CD4-positive, alpha-beta memory T cell (primary cell): ENCODE measurements at regions of chr6 and their contacts with region 1.

Region 1: GRCh38 chr6:26087284-26088115 is at the start of gene HFE:
- DNase-seq: peak in 4 of 5 donors; percentile 24 to 43 (median 26)
- H3K4me3 ChIP-seq: peak within 1 kb of the TSS; percentile 67 to 79
- H3K4me3 Mint-ChIP-seq: peak within 1 kb of the TSS; percentile 77 to 93 (median 90)
- H3K27ac ChIP-seq: peak within 1 kb of the TSS; percentile 68
- H3K27ac Mint-ChIP-seq: peak within 1 kb of the TSS; percentile 71 to 94 (median 90)
- H3K4me1 ChIP-seq: peaks cover 36% of the 10 kb centered on the region
- H3K4me1 Mint-ChIP-seq: peaks cover 20 to 41% (median 28%) of the 10 kb centered on the region in 4 donors
- H3K27me3 ChIP-seq: no peaks in the 10 kb centered on the region
- H3K27me3 Mint-ChIP-seq: no peaks in the 10 kb centered on the region
- total RNA-seq, gene HFE: 3.5 to 4.2 TPM

Region 2: DNA sequence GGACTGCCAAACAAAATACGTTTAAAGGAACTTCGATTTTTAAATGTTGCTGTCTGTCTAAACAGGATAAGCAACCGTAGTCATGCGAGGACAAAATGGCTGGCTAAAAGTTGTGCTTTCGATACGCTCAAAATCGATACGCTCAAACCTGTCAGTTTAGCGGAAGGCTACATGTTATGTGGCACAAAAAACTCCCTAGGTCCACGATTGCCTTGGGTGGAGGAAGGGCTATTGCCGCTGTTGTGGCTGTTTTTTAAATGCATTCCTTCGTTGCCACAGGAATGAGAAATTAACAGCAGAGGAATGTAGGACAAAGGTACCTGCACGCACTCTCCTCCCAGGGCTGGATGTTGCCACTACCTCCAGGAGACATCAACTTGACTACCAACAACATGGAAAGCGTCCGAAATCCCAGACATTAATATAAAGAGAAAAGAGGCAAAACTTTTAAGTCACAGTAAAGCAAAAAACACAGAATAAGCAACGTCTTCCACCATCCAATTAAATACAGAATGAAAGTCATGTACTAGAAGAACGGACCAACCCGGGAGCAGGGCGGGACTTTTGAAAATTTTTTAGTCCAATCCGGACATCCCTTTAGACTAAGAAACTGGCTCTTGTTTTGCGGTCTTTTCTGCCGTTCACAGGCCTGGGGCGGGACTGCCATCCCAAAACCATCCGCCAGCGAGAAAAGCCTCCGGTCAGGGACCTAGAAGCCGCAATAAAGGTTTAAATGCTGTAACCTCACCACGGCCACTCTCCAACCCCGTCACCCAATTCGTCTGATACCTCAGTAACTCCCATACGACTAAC is 32.4 kb before region 1 on chr6:
- CTCF ChIA-PET with region 1: interaction called, 533 read pairs
- POLR2A ChIA-PET with region 1: interaction called, 59 read pairs
- intact Hi-C with region 1: no loop called
- DNase-seq: peak; percentile 89 to 96 (median 91)
- H3K4me3 ChIP-seq: peak overlapping the region; percentile 67 to 78
- H3K4me3 Mint-ChIP-seq: peak overlapping the region; percentile 93 to 96 (median 94)
- H3K27ac ChIP-seq: peak overlapping the region; percentile 84
- H3K27ac Mint-ChIP-seq: peak overlapping the region; percentile 91 to 98 (median 98)
- H3K4me1 ChIP-seq: peaks cover 24% of the 10 kb centered on the region
- H3K4me1 Mint-ChIP-seq: peaks cover 7 to 34% (median 15%) of the 10 kb centered on the region in 4 donors
- H3K27me3 ChIP-seq: no peaks in the 10 kb centered on the region
- H3K27me3 Mint-ChIP-seq: no peaks in the 10 kb centered on the region

Region 3: DNA sequence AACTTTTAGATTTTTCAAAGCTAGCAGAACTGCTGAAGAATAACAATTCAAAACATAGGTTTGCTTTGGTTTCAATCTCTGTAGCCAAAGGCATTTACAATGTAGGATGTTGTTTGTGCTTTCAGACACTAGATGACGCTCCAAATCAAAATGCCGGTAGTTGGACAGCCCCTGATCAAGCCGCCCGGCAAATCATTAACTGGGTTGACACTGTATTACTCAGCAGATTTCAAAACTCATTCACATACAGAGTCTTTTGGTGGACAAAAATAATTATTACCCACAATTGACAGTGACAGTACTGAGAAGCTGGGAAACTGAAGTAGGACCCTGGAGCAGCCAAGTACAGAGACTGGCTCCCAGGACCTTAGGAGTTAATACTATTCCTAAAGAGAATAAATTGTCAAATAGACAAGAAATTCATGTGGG is 21.5 kb before region 1 on chr6:
- CTCF ChIA-PET with region 1: interaction called, 533 read pairs
- POLR2A ChIA-PET with region 1: interaction called, 22 read pairs
- intact Hi-C with region 1: no loop called
- DNase-seq: peak; percentile 70 to 76 (median 71)
- H3K4me3 ChIP-seq: no peak overlapping the region
- H3K4me3 Mint-ChIP-seq: no peak overlapping the region
- H3K27ac ChIP-seq: no peak overlapping the region
- H3K27ac Mint-ChIP-seq: peak overlapping the region in 1 of 7 donors; percentile 30
- H3K4me1 ChIP-seq: no peaks in the 10 kb centered on the region
- H3K4me1 Mint-ChIP-seq: peaks cover 4 to 12% (median 7%) of the 10 kb centered on the region in 4 donors
- H3K27me3 ChIP-seq: no peaks in the 10 kb centered on the region
- H3K27me3 Mint-ChIP-seq: peaks cover 0 to 4% of the 10 kb centered on the region in 2 donors

Region 4: GRCh38 chr6:26071135-26071534 is 16.4 kb before region 1 on chr6:
- CTCF ChIA-PET with region 1: interaction called, 533 read pairs
- POLR2A ChIA-PET with region 1: interaction called, 22 read pairs
- intact Hi-C with region 1: no loop called
- DNase-seq: no peak
- H3K4me3 ChIP-seq: no peak overlapping the region
- H3K4me3 Mint-ChIP-seq: no peak overlapping the region
- H3K27ac ChIP-seq: no peak overlapping the region
- H3K27ac Mint-ChIP-seq: no peak overlapping the region
- H3K4me1 ChIP-seq: no peaks in the 10 kb centered on the region
- H3K4me1 Mint-ChIP-seq: peaks cover 0 to under 1% (median under 1%) of the 10 kb centered on the region in 4 donors
- H3K27me3 ChIP-seq: no peaks in the 10 kb centered on the region
- H3K27me3 Mint-ChIP-seq: peaks cover 2 to 8% of the 10 kb centered on the region in 2 donors

Region 5: GRCh38 chr6:26473758-26474438 is 386.4 kb after region 1 on chr6:
- CTCF ChIA-PET with region 1: no interaction called
- POLR2A ChIA-PET with region 1: no interaction called
- intact Hi-C with region 1: no loop called
- DNase-seq: peak; percentile 91 to 94 (median 92)
- H3K4me3 ChIP-seq: peak overlapping the region; percentile 63 to 73
- H3K4me3 Mint-ChIP-seq: peak overlapping the region; percentile 84 to 99 (median 94)
- H3K27ac ChIP-seq: peak overlapping the region; percentile 81
- H3K27ac Mint-ChIP-seq: peak overlapping the region; percentile 99 to 100 (median 99)
- H3K4me1 ChIP-seq: peaks cover 52% of the 10 kb centered on the region
- H3K4me1 Mint-ChIP-seq: peaks cover 37 to 72% (median 51%) of the 10 kb centered on the region in 4 donors
- H3K27me3 ChIP-seq: no peaks in the 10 kb centered on the region
- H3K27me3 Mint-ChIP-seq: no peaks in the 10 kb centered on the region